Activated naive CD4-positive, alpha-beta T cell treated with anti-CD3 and anti-CD28 coated beads for 36 hours (primary cell): ENCODE measurements at regions of chr1 and their contacts with region 1.

Region 1: DNA sequence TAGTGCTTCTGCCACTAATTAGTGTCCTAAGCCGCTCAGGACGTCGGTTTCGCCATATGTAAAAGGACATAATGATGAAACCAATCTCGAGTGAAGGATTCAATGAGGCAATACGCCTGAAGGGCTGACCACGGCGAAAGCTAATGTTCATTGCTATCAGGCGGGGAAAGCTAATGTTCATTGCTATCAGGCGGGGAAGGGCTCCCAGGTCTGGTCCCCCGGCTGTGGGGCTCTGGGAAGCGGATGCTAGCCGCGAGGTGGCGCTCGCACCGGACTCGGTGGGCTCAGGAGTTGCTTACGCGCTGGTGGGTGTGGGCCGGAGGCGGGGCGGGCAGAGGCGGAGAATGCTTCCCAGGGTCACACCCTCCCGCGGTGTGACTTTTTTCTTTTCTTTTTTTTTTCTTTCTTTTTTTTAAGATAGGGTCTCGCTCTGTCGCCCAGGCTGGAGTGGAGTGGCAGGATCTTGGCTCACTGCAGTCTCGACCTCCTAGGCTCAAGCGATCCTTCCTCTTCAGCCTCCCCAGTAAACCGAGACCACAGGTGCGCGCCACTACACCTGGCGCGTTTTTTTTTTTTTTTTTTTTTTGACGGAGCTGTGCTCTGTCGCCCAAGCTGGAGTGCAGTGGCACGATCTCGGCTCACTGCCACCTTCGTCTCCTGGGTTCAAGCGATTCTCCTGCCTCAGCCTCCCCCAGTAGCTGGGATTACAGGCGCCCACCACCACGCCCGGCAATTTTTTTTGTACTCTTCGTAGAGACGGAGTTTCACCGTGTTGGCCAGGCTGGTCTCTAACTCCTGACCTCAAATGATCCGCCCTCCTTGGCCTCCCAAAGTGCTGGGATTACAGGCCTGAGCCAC is 1.1 kb upstream of the PEAR1 start:
- DNase-seq: peak; percentile 92
- H3K4me3 Mint-ChIP-seq: peak overlapping the region; percentile 41
- H3K27ac Mint-ChIP-seq: no peak overlapping the region
- H3K4me1 Mint-ChIP-seq: peaks cover 11% of the 10 kb centered on the region
- H3K27me3 Mint-ChIP-seq: peaks cover 47% of the 10 kb centered on the region

Region 2: GRCh38 chr1:156797212-156797871 is 95.1 kb before region 1 on chr1:
- CTCF ChIA-PET with region 1: interaction called, 39 read pairs
- intact Hi-C with region 1: loop called (anchors 1 kb)
- DNase-seq: peak; percentile 78
- H3K4me3 Mint-ChIP-seq: no peak overlapping the region
- H3K27ac Mint-ChIP-seq: no peak overlapping the region
- H3K4me1 Mint-ChIP-seq: no peaks in the 10 kb centered on the region
- H3K27me3 Mint-ChIP-seq: no peaks in the 10 kb centered on the region

Region 3: GRCh38 chr1:156880473-156880872 is 11.9 kb before region 1 on chr1:
- CTCF ChIA-PET with region 1: interaction called, 11 read pairs
- intact Hi-C with region 1: no loop called
- DNase-seq: no peak
- H3K4me3 Mint-ChIP-seq: no peak overlapping the region
- H3K27ac Mint-ChIP-seq: no peak overlapping the region
- H3K4me1 Mint-ChIP-seq: no peaks in the 10 kb centered on the region
- H3K27me3 Mint-ChIP-seq: peaks cover 7% of the 10 kb centered on the region

Region 4: DNA sequence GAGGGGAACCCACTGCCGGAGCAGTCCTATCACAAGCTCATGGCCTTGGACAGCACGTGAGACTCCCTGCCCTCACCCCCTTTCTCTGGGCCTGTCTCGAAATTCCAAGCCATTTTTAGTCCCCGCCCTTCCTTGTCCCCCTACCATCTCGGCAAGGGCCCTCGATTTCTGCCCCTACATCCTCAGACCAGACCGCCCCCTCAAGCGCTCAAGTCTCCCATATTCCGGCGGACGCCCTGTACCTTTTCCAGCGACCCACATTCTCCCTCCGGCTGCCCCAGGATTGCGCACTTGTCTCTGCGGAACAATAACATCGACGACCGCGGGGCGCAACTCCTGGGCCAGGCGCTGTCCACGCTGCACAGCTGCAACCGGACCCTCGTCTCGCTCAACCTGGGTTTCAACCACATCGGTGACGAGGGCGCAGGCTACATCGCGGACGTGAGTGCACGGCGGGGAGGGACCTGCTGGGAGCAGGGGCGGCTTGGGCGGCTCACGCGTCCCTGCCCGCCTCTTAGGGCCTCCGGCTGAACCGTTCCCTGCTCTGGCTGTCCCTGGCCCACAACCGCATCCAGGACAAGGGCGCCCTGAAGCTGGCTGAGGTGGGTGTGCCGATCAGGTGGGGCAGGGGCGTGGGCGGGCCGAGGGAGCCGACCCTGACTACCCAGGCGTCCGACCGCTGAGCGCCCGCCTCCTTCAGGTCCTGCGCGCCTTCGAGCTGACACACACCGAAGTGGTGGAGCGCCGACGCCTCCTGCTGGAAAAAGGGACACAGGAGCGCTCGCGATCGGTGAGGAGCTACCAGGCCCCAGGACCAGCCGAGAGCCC is 35.0 kb after region 1 on chr1:
- CTCF ChIA-PET with region 1: interaction called, 79 read pairs
- intact Hi-C with region 1: loop called (anchors 1 kb)
- DNase-seq: peak; percentile 84
- H3K4me3 Mint-ChIP-seq: no peak overlapping the region
- H3K27ac Mint-ChIP-seq: no peak overlapping the region
- H3K4me1 Mint-ChIP-seq: peaks cover 14% of the 10 kb centered on the region
- H3K27me3 Mint-ChIP-seq: peaks cover 77% of the 10 kb centered on the region

Region 5: GRCh38 chr1:156948708-156949107 is 56.3 kb after region 1 on chr1:
- CTCF ChIA-PET with region 1: no interaction called
- intact Hi-C with region 1: no loop called
- DNase-seq: no peak
- H3K4me3 Mint-ChIP-seq: no peak overlapping the region
- H3K27ac Mint-ChIP-seq: no peak overlapping the region
- H3K4me1 Mint-ChIP-seq: no peaks in the 10 kb centered on the region
- H3K27me3 Mint-ChIP-seq: no peaks in the 10 kb centered on the region

Region 6: DNA sequence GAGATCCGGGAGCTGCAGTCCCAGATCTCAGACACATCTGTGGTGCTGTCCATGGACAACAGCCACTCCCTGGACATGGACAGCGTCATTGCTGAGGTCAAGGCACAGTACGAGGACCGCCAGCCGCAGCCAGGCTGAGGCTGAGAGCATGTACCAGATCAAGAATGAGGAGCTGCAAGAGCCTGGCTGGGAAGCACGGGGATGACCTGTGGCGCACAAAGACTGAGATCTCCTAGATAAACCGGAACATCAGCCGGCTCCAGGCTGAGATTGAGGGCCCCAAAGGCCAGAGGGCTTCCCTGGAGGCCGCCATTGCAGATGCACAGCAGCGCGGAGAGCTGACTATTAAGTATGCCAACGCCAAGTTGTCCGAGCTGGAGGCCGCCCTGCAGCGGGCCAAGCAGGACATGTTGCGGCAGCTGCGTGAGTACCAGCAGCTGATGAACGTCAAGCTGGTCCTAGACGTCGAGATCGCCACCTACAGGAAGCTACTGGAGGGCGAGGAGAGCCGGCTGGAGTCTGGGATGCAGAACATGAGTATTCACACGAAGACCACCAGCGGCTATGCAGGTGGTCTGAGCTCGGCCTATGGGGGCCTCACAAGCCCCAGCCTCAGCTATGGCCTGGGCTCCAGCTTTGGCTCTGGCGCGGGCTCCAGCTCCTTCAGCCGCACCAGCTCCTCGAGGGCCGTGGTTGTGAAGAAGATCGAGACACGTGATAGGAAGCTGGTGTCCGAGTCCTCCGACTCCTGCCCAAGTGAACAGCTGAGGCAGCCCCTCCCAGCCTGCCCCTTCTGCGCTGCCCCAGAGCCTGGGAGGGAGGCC is 181.7 kb after region 1 on chr1:
- CTCF ChIA-PET with region 1: no interaction called
- intact Hi-C with region 1: loop called (anchors 10 kb)
- DNase-seq: peak; percentile 72
- H3K4me3 Mint-ChIP-seq: no peak overlapping the region
- H3K27ac Mint-ChIP-seq: no peak overlapping the region
- H3K4me1 Mint-ChIP-seq: peaks cover 1% of the 10 kb centered on the region
- H3K27me3 Mint-ChIP-seq: peaks cover 10% of the 10 kb centered on the region